Motor neuron (in vitro differentiated cells): ENCODE measurements at regions of chr22 and their contacts with region 1.

Region 1: DNA sequence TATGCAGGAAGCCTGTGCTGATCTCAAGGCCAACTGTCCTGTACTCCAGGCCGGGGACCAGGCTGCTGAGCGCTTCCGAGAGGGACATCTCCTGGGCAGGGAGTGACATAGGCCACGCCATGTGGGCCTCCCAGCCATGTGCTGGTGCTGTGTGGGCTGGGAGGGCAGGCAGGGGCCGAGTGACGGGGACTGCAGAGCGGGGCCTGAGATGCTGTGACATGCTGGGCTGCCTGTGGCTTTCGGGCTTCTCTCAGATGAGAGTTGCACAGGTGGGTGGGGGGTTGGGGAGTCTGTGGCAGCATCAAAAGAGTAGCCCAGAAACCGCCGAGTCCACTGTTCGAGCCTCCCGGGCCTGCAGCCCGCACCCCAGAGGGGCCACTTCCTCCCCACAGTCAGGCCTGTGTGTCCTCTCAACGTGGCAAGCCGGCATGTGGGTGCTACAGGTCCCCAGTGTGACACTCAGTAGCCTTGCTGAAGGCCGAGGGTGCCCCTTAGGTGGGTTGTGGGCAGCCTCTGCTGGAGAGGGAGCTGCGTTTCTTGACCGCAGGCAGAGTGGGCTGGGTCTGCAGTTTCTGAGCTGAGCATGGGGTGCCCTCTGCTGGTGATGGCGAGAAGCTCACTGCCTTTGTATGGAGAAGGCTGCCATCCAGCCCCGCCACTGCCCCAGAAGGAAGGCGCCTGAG is 101.2 kb downstream of the BCR start:
- ATAC-seq: peak; percentile 85 to 97 (median 96)
- H3K4me3 ChIP-seq: no peak overlapping the region
- H3K27ac ChIP-seq: peak overlapping the region in 1 of 2 donors; percentile 45
- H3K4me1 ChIP-seq: peaks cover 0 to 2% of the 10 kb centered on the region in 2 donors

Region 2: GRCh38 chr22:23178512-23179254 is 102.9 kb before region 1 on chr22:
- in situ Hi-C with region 1: loop called (anchors 5 to 25 kb)
- ATAC-seq: peak; percentile 16 to 52 (median 42)
- H3K4me3 ChIP-seq: no peak overlapping the region
- H3K27ac ChIP-seq: peak overlapping the region in 1 of 2 donors; percentile 86
- H3K4me1 ChIP-seq: peaks cover 22 to 25% of the 10 kb centered on the region in 2 donors

Region 3: DNA sequence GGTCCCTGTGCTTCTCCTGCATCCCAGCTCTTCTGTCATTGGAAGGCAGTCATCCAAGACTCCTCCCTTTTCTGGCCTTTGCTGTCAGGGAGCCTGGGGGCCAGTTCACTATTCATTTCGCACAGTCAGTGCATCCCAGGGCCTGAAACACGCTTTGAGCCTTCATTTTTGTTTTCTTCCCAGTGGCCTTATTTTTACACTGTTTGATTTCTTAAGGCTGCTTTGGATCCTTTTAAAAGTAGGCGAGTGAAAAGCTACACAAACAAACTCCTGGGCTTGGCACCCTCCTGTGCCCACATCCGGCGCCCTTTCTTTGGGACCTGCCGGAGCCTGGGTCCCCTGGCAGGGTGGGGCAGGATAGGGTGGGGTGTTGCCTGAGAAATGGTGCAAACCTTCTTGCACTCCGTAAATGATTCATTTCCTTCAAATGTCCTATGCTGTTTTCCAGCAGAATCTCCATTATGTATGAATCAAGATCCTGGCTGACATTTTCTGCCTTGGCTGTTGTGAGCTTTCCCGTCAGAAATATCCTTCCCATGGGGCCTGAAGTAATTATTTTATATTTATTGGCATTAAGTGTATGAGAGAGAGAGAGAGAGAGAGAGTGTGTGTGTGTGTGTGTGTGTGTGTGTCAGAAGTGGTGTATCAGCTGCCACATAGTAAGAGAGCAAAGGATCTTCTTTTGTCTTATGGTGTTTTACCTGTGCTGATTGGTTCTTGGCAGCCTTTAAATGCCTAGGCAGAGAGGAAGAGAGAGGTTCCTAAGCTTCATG is 55.6 kb before region 1 on chr22:
- in situ Hi-C with region 1: no loop called
- ATAC-seq: peak; percentile 69 to 93 (median 78)
- H3K4me3 ChIP-seq: no peak overlapping the region
- H3K27ac ChIP-seq: peak overlapping the region; percentile 65 to 66
- H3K4me1 ChIP-seq: peaks cover 54 to 62% of the 10 kb centered on the region in 2 donors

Region 4: DNA sequence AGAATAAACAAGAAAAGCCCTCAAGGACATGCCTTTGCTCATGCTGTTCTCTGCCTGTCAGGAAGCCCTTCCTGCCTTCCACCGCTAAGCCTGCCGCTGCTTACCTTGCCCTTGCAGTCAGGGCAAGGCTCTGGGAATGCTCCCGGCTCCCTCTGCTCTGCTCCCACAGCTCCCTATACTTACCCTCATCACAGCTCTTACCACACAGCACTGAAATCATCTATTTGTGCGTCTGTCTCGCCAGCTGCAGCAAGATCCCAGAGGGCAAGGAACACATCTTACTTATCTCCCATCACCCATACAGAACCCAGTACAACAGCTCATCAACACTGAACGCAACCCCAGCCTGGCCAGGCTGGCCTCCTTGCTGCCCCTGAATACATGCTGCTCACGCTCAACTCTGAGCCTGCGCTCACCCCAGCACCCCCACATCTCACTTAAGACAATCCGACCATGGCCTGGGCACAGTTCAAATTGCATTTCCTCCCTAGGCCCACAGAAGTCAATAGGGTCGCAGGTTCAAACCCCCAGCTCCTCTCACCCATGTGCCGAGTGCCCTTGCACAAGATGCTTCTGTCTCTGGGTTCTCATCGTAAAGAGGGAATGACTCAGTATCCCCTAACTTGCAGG is 136.7 kb after region 1 on chr22:
- in situ Hi-C with region 1: no loop called
- ATAC-seq: peak in 3 of 8 experiments; percentile 27 to 41 (median 39)
- H3K4me3 ChIP-seq: no peak overlapping the region
- H3K27ac ChIP-seq: no peak overlapping the region
- H3K4me1 ChIP-seq: no peaks in the 10 kb centered on the region